ENCODE measurements at regions of chr2 and their contacts with region 1.

Region 1: DNA sequence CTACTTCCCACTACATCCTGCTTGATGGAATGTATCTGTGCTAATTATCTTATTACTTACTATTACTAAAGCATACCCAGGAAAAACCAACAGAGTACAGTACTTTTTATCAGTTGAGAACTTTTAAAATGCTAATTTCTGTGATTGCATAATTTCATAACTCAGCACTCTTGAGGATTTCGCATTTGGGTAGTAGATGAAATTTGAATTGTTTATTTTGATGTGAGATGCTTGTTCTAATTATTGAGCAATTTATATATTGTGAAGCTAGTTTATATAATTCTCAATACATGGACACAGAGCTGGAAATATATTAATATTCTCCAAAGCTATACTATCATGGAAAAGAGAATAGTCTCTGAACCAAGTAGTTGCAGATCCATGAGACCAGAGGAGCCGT is 104.5 kb upstream of the SP5 start:
- DNase-seq: no peak
- ATAC-seq: no peak

Region 2: GRCh38 chr2:170660409-170660808 is 49.8 kb after region 1 on chr2:
- intact Hi-C with region 1: loop called in 1 of 2 experiments (anchors 10 kb)
- DNase-seq: no peak
- ATAC-seq: peak; percentile 56